Activated CD8-positive, alpha-beta T cell treated with anti-CD3 and anti-CD28 coated beads for 36 hours (primary cell): ENCODE measurements at regions of chr6 and their contacts with region 1.

Region 1: GRCh38 chr6:89270951-89271721 is 44.0 kb downstream of the GABRR2 start:
- DNase-seq: no peak
- ATAC-seq: no peak
- H3K4me3 Mint-ChIP-seq: no peak overlapping the region
- H3K27ac Mint-ChIP-seq: no peak overlapping the region
- H3K4me1 Mint-ChIP-seq: no peaks in the 10 kb centered on the region
- H3K27me3 Mint-ChIP-seq: no peaks in the 10 kb centered on the region
- CTCF ChIP-seq: no peak

Region 2: DNA sequence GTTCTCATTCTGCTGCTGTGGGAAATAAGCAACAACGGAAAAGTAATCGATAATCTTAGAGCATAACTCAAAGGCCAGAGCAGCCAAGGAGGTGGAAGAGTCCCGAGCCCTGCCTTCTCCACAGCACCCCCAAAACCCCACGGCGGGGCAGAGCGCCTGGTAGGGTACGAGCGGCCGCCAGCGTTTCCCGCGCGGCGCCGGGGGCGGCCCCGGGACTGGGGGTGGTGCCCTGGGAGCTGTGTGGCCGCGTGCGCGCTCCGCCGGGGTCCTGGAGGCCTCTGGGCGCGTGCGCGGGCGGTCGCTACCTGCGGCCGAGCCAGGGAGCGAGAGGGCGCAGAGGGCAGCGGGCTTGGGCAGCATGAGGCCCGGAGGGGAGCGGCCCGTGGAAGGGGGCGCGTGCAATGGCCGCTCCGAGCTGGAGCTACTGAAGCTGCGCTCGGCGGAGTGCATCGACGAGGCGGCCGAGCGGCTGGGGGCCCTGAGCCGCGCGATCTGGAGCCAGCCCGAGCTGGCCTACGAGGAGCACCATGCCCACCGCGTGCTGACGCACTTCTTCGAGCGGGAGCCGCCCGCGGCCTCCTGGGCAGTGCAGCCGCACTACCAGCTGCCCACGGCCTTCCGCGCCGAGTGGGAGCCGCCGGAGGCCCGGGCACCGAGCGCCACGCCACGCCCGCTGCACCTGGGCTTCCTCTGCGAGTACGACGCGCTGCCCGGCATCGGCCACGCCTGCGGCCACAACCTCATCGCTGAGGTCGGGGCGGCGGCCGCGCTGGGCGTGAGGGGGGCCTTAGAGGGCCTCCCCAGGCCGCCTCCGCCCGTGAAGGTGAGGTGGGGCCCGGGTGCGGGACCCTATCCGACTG is 125.1 kb before region 1 on chr6 and contains the start of gene PM20D2:
- CTCF ChIA-PET with region 1: no interaction called
- POLR2A ChIA-PET with region 1: no interaction called
- intact Hi-C with region 1: no loop called
- DNase-seq: peak; percentile 79
- ATAC-seq: peak; percentile 82
- H3K4me3 Mint-ChIP-seq: peak within 1 kb of the TSS; percentile 88
- H3K27ac Mint-ChIP-seq: peak within 1 kb of the TSS; percentile 98
- H3K4me1 Mint-ChIP-seq: peaks cover 33% of the 10 kb centered on the region
- H3K27me3 Mint-ChIP-seq: peaks cover 2% of the 10 kb centered on the region
- CTCF ChIP-seq: no peak
- total RNA-seq, gene PM20D2: 25.4 to 26.0 TPM

Region 3: DNA sequence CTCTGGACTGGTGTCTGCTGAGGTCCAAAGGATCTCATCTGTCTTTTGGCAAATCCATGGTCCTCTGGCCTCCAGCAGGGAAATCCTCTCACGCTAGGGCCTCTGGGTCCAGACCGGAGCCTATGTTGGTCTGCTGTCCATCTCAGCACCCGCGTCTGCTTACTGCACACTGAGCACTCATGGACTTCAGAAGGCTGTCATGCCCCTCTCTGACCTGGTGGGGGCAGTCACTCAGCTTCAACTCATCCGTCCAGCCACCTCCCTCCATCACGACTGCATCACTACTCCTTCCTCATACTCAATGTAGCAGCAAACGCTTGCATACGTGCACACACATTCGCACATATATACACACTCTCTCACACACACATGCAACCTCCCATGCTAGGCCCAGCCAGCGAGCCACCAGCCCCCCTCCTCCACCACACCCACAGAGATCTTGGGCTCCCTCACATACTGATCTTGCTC is 10.7 kb after region 1 on chr6:
- CTCF ChIA-PET with region 1: interaction called, 20 read pairs
- POLR2A ChIA-PET with region 1: no interaction called
- intact Hi-C with region 1: no loop called
- DNase-seq: peak; percentile 65
- ATAC-seq: peak; percentile 98
- H3K4me3 Mint-ChIP-seq: no peak overlapping the region
- H3K27ac Mint-ChIP-seq: no peak overlapping the region
- H3K4me1 Mint-ChIP-seq: no peaks in the 10 kb centered on the region
- H3K27me3 Mint-ChIP-seq: no peaks in the 10 kb centered on the region
- CTCF ChIP-seq: peak; percentile 64